HEK293 (cell line): ENCODE measurements at regions of chr2 and their contacts with region 1.

Region 1: GRCh38 chr2:149430743-149431737 is 100.7 kb downstream of the LYPD6 start:
- H3K4me3 ChIP-seq: no peak overlapping the region
- H3K27ac ChIP-seq: no peak overlapping the region
- H3K4me1 ChIP-seq: no peaks in the 10 kb centered on the region
- CTCF ChIP-seq: no peak

Region 2: GRCh38 chr2:149441255-149441654 is 10.2 kb after region 1 on chr2:
- CTCF ChIA-PET with region 1: no interaction called
- POLR2A ChIA-PET with region 1: no interaction called
- H3K4me3 ChIP-seq: no peak overlapping the region
- H3K27ac ChIP-seq: no peak overlapping the region
- H3K4me1 ChIP-seq: peaks cover 5% of the 10 kb centered on the region; the same call in 1 of the 2 replicates
- CTCF ChIP-seq: no peak

Region 3: GRCh38 chr2:149473521-149473920 is 42.5 kb after region 1 on chr2:
- CTCF ChIA-PET with region 1: no interaction called
- POLR2A ChIA-PET with region 1: interaction called, 14 read pairs
- H3K4me3 ChIP-seq: no peak overlapping the region
- H3K27ac ChIP-seq: no peak overlapping the region
- H3K4me1 ChIP-seq: no peaks in the 10 kb centered on the region
- CTCF ChIP-seq: no peak